H1 (cell line): ENCODE measurements at regions of chr1 and their contacts with region 1.

Region 1: DNA sequence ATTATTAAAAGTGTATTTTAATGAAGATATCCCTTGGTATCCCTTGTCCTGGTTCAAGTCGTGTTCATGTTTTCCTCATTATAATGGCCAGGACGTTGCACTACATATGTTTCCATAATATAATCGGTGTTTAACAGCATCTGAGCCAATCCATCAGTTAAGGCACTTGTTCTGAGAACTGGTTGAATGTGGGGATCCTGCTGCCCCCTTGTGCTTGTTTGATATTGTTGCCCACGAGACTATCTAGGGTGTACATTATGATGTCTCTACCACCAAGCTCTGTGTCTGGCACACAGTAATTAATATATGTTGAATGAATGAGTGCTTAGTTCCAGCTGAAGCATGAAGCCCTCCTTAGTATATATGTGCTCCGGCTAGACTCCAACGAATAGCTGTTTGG is 193.0 kb downstream of the CACNA1E start:
- DNase-seq: peak in 1 of 2 experiments; percentile 52
- H3K4me3 ChIP-seq: no peak overlapping the region
- H3K27ac ChIP-seq: no peak overlapping the region
- H3K4me1 ChIP-seq: peaks cover 0 to 5% (median 2%) of the 10 kb centered on the region in 4 experiments; a peak in 4 of 7 replicates
- H3K27me3 ChIP-seq: no peaks in the 10 kb centered on the region
- CTCF ChIP-seq: peak in 2 of 3 experiments; percentile 67 to 73; a peak in 3 of 4 replicates
- EP300 ChIP-seq: no peak
- POLR2A ChIP-seq: no peak
- RAD21 ChIP-seq: peak; percentile 82 to 87

Region 2: DNA sequence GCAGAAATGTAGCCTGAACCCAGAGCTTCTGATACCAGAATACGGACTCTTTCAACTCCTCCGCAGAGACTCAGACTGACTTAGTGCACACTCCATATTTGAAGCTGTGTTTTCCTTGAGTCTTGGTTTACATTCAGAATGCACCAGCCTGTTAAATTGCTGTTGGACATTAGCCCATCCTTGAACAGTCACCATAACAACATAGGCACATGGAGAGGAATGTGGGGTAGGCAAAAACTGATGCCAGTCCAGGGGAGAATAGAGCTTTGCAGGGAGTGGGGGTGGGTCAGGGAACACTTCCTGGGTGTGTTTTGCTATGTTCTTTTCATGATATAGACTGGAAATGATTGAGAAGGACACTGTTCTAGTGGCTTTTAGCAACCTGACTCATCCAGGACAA is 269.3 kb before region 1 on chr1:
- CTCF ChIA-PET with region 1: no interaction called
- POLR2A ChIA-PET with region 1: no interaction called
- DNase-seq: no peak
- H3K4me3 ChIP-seq: no peak overlapping the region
- H3K27ac ChIP-seq: no peak overlapping the region
- H3K4me1 ChIP-seq: no peaks in the 10 kb centered on the region
- H3K27me3 ChIP-seq: no peaks in the 10 kb centered on the region
- CTCF ChIP-seq: no peak
- EP300 ChIP-seq: no peak
- POLR2A ChIP-seq: no peak
- RAD21 ChIP-seq: no peak

Region 3: DNA sequence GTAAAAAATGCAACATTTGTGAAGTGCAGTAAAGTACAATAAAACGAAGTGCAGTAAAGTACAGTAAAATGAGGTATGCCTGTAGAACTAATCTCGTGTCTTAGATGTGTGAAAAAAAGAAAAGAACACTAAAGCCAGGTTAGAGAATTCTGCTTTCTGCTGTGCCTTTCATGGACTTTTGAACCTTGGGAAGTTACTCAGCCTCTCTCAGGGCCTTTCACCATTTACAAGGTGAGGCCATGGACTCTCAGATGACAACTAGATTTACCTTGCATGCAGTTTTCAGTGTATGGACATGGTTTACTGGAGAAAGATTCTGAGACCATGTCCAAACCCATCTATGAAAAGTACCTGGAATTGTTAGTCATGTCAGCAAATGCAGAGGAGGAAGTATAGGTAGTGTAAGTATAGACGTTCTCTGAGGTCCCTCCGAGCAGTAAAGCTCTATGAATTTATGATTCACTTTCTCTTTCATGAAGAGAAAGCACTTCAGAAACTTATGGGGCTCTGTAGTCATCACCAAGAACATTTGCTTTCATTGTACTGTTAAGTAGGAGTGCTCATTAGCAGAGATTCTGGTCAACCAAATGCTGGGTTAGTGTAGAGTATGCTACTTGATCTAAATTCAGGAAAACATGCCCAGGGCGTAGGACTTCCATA is 49.9 kb before region 1 on chr1:
- CTCF ChIA-PET with region 1: no interaction called
- POLR2A ChIA-PET with region 1: no interaction called
- DNase-seq: no peak
- H3K4me3 ChIP-seq: no peak overlapping the region
- H3K27ac ChIP-seq: no peak overlapping the region
- H3K4me1 ChIP-seq: peaks cover 0 to 2% (median 0%) of the 10 kb centered on the region in 4 experiments; a peak in 1 of 7 replicates
- H3K27me3 ChIP-seq: no peaks in the 10 kb centered on the region
- CTCF ChIP-seq: no peak
- EP300 ChIP-seq: no peak
- POLR2A ChIP-seq: no peak
- RAD21 ChIP-seq: no peak

Region 4: DNA sequence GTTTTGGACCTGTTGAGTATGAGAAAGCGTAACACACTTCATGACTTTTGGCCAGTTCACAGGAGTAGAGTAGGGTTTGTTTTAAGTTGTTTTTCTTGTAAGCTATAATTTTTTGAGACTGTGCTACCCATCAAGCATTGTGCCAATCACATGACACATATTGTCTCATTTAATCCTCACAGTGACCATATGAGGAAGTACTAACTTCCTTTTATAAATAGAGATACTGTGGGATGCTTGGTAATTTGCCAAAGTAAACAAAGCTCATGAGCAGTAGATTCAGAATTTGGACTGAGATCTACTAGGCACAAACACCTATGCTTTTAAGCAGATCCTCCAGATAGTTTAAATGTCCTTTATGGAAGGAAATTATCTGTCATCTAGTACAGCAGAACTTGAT is 14.7 kb before region 1 on chr1:
- CTCF ChIA-PET with region 1: interaction called, 12 read pairs
- POLR2A ChIA-PET with region 1: no interaction called
- DNase-seq: no peak
- H3K4me3 ChIP-seq: no peak overlapping the region
- H3K27ac ChIP-seq: no peak overlapping the region
- H3K4me1 ChIP-seq: peaks cover 0 to 3% (median 0%) of the 10 kb centered on the region in 4 experiments; a peak in 1 of 7 replicates
- H3K27me3 ChIP-seq: no peaks in the 10 kb centered on the region
- CTCF ChIP-seq: no peak
- EP300 ChIP-seq: no peak
- POLR2A ChIP-seq: no peak
- RAD21 ChIP-seq: no peak

Region 5: DNA sequence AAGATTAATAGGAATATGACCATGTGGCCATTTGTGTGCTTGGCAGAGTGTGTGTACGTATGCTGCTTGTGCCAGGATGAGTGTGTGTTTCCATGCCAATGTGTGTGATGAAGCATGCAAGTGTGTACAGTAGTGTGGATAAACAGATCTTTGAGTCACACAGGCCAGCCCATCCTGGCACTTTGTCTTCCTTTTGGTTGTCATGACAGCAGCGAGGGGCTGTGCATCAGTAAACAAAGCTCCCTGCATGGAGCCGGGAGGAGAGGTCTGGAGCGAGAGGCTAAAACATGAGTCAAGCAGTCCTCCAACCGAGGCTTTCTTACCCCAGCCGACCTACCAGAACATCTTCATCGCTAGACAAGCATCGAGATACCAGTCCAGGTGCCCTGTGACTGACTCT is 28.3 kb after region 1 on chr1:
- CTCF ChIA-PET with region 1: interaction called, 10 read pairs
- POLR2A ChIA-PET with region 1: no interaction called
- DNase-seq: no peak
- H3K4me3 ChIP-seq: no peak overlapping the region
- H3K27ac ChIP-seq: no peak overlapping the region
- H3K4me1 ChIP-seq: no peaks in the 10 kb centered on the region
- H3K27me3 ChIP-seq: no peaks in the 10 kb centered on the region
- CTCF ChIP-seq: no peak
- EP300 ChIP-seq: no peak
- POLR2A ChIP-seq: no peak
- RAD21 ChIP-seq: no peak

Region 6: GRCh38 chr1:181718034-181718433 is 41.8 kb after region 1 on chr1:
- CTCF ChIA-PET with region 1: interaction called, 11 read pairs
- POLR2A ChIA-PET with region 1: no interaction called
- DNase-seq: no peak
- H3K4me3 ChIP-seq: no peak overlapping the region
- H3K27ac ChIP-seq: no peak overlapping the region
- H3K4me1 ChIP-seq: peaks cover 0 to 10% (median 4%) of the 10 kb centered on the region in 4 experiments; a peak in 6 of 7 replicates
- H3K27me3 ChIP-seq: no peaks in the 10 kb centered on the region
- CTCF ChIP-seq: no peak
- EP300 ChIP-seq: no peak
- POLR2A ChIP-seq: no peak
- RAD21 ChIP-seq: no peak

Region 7: DNA sequence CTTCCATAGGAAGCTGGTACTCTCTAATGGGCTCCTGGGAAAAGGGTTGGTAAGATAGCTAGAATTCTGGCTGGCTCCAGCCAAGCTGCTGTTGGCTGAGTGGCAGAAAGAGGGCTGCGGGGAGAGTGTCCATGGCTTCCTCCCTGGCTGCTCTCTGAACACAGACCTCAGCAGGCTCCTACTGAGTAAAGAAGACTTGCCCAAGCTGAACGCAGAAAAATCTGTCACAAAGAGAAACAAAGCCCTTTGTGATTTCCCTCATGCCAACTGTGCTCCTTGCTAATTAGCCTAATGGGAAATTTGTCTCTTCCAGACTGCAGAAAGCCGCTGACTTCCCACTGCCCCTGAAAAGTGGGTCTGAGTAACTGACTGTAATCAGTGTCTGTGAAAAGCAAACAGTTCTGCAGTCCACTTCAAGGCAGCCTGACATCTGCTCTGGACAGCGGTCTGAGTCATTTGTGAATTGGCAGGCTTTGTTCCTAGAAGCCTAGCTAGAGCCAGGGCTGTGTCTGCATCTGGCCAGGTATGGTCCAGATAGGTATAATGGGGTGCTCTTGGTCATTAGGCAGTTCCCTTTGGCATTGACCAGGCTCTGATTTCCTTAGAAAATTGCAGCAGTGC is 102.5 kb after region 1 on chr1:
- CTCF ChIA-PET with region 1: no interaction called
- POLR2A ChIA-PET with region 1: no interaction called
- DNase-seq: no peak
- H3K4me3 ChIP-seq: no peak overlapping the region
- H3K27ac ChIP-seq: no peak overlapping the region
- H3K4me1 ChIP-seq: peaks cover 0 to 7% (median 2%) of the 10 kb centered on the region in 4 experiments; a peak in 3 of 7 replicates
- H3K27me3 ChIP-seq: peaks cover 0 to 3% (median 0%) of the 10 kb centered on the region in 4 experiments; a peak in 1 of 7 replicates
- CTCF ChIP-seq: no peak
- EP300 ChIP-seq: no peak
- POLR2A ChIP-seq: no peak
- RAD21 ChIP-seq: no peak